MCF 10A (cell line): ENCODE measurements at regions of chr19 and their contacts with region 1.

Region 1: GRCh38 chr19:48993175-48994034 is at the starts of genes GYS1 and RUVBL2:
- DNase-seq: peak; percentile 100
- H3K4me3 Mint-ChIP-seq: peak within 1 kb of the TSS; percentile 95
- H3K27ac Mint-ChIP-seq: peak within 1 kb of the TSS; percentile 95
- H3K4me1 Mint-ChIP-seq: peaks cover 34% of the 10 kb centered on the region
- H3K27me3 Mint-ChIP-seq: no peaks in the 10 kb centered on the region
- CTCF ChIP-seq: peak; percentile 90
- total RNA-seq, gene GYS1: 29.7 and 42.7 TPM in 2 replicates
- total RNA-seq, gene RUVBL2: 126 and 156 TPM in 2 replicates

Region 2: DNA sequence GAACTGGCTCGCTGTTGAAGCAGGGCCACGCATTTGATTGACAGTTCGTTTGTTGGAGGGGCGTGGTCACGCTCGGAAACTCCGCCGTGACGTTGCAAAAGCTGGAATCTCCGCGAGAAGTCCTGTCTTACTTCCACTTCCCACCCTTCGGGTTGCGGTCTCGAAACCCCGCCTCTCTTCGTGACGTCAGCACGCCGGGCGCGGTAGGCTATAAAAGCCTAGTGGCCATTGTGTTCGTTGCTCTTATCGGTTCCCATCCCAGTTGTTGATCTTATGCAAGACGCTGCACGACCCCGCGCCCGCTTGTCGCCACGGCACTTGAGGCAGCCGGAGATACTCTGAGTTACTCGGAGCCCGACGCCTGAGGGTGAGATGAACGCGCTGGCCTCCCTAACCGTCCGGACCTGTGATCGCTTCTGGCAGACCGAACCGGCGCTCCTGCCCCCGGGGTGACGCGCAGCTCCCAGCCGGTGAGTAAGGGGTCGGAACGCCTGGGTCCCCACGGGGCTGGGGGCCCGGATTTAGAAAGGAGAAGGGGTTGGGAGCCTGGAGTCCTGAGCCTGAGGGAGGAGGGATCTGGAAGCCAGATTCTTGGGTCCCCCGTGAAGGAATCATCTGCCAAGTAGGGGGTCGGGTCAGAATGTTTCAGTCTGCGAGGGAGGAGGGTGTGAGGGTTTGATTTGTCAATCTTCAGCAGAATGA is 121.1 kb before region 1 on chr19 and contains the start of gene PPP1R15A:
- CTCF ChIA-PET with region 1: no interaction called
- POLR2A ChIA-PET with region 1: interaction called, 54 read pairs
- intact Hi-C with region 1: no loop called
- DNase-seq: peak; percentile 99
- H3K4me3 Mint-ChIP-seq: peak within 1 kb of the TSS; percentile 98
- H3K27ac Mint-ChIP-seq: peak within 1 kb of the TSS; percentile 100
- H3K4me1 Mint-ChIP-seq: peaks cover 38% of the 10 kb centered on the region
- H3K27me3 Mint-ChIP-seq: no peaks in the 10 kb centered on the region
- CTCF ChIP-seq: no peak
- total RNA-seq, gene PPP1R15A: 207 and 248 TPM in 2 replicates

Region 3: GRCh38 chr19:48965040-48965805 is 28.2 kb before region 1 on chr19 and contains the start of gene FTL:
- CTCF ChIA-PET with region 1: interaction called, 18 read pairs
- POLR2A ChIA-PET with region 1: interaction called, 98 read pairs
- intact Hi-C with region 1: no loop called
- DNase-seq: peak; percentile 95
- H3K4me3 Mint-ChIP-seq: peak within 1 kb of the TSS; percentile 97
- H3K27ac Mint-ChIP-seq: peak within 1 kb of the TSS; percentile 96
- H3K4me1 Mint-ChIP-seq: peaks cover 35% of the 10 kb centered on the region
- H3K27me3 Mint-ChIP-seq: no peaks in the 10 kb centered on the region
- CTCF ChIP-seq: no peak
- total RNA-seq, gene FTL: 275 and 390 TPM in 2 replicates

Region 4: GRCh38 chr19:48975947-48976847 is 17.2 kb before region 1 on chr19:
- CTCF ChIA-PET with region 1: interaction called, 39 read pairs
- POLR2A ChIA-PET with region 1: interaction called, 61 read pairs
- intact Hi-C with region 1: loop called (anchors 1 kb)
- DNase-seq: peak; percentile 20
- H3K4me3 Mint-ChIP-seq: no peak overlapping the region
- H3K27ac Mint-ChIP-seq: no peak overlapping the region
- H3K4me1 Mint-ChIP-seq: peaks cover 12% of the 10 kb centered on the region
- H3K27me3 Mint-ChIP-seq: no peaks in the 10 kb centered on the region
- CTCF ChIP-seq: no peak

Region 5: GRCh38 chr19:49006926-49007325 is 13.5 kb after region 1 on chr19:
- CTCF ChIA-PET with region 1: interaction called, 13 read pairs
- POLR2A ChIA-PET with region 1: interaction called, 13 read pairs
- intact Hi-C with region 1: no loop called
- DNase-seq: no peak
- H3K4me3 Mint-ChIP-seq: no peak overlapping the region
- H3K27ac Mint-ChIP-seq: no peak overlapping the region
- H3K4me1 Mint-ChIP-seq: no peaks in the 10 kb centered on the region
- H3K27me3 Mint-ChIP-seq: no peaks in the 10 kb centered on the region
- CTCF ChIP-seq: no peak

Region 6: DNA sequence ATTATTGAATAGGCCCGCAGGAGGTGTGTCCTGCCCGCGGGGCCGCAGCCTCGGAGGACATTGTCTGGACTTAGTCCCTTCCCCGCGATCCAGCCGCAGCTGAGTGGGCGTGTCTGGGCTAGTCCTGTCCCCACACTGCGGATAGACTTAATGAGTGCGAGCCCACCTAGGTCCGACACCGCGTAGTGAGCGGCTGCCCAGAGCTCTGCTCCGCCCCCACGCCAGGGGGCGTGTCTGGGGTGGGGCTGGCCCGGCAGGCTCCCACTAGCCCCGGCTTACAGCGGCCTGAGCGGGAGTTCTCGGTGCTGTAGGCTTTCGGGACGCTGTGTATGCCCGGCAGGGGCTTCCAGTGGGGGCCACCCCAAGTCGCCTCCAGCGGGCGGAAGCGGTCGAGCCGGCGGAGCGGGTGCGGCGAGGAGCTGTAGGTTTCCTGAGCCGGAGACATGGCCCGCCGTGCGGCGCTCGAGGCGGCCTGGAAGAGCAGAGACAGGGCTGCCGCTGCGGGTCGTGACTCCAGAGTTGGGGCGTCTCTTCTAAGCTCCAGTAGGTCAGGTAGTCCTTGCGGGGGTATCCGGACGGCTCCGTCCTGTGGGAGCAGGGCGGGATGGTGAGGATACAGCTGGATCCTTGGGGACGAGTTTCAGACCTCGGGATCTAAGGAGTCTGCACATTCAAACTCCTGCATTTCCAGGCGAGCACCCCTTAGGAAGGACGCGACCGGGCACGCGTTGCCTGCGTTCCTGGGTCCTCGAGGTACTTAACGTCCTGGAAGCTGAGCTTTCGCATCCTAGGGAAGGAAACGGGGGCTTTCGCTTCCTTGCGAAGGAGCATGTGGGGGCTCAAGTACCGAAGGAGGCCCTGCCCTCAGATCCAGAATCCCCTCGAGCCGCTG is 62.9 kb after region 1 on chr19:
- CTCF ChIA-PET with region 1: interaction called, 5 read pairs
- POLR2A ChIA-PET with region 1: interaction called, 22 read pairs
- intact Hi-C with region 1: no loop called
- DNase-seq: peak; percentile 55
- H3K4me3 Mint-ChIP-seq: peak overlapping the region; percentile 64
- H3K27ac Mint-ChIP-seq: no peak overlapping the region
- H3K4me1 Mint-ChIP-seq: peaks cover 17% of the 10 kb centered on the region
- H3K27me3 Mint-ChIP-seq: no peaks in the 10 kb centered on the region
- CTCF ChIP-seq: peak; percentile 15

Region 7: GRCh38 chr19:49214701-49215100 is 221.3 kb after region 1 on chr19:
- CTCF ChIA-PET with region 1: no interaction called
- POLR2A ChIA-PET with region 1: no interaction called
- intact Hi-C with region 1: no loop called
- DNase-seq: no peak
- H3K4me3 Mint-ChIP-seq: no peak overlapping the region
- H3K27ac Mint-ChIP-seq: no peak overlapping the region
- H3K4me1 Mint-ChIP-seq: no peaks in the 10 kb centered on the region
- H3K27me3 Mint-ChIP-seq: no peaks in the 10 kb centered on the region
- CTCF ChIP-seq: no peak